PC-9 (cell line): ENCODE measurements at regions of chr3 and their contacts with region 1.

Region 1: GRCh38 chr3:120795017-120795648 is 52.6 kb downstream of the GTF2E1 start:
- DNase-seq: peak in 1 of 2 experiments; percentile 66
- H3K4me3 ChIP-seq: no peak overlapping the region
- H3K27ac ChIP-seq: no peak overlapping the region
- H3K4me1 ChIP-seq: no peaks in the 10 kb centered on the region
- H3K27me3 ChIP-seq: no peaks in the 10 kb centered on the region
- CTCF ChIP-seq: peak; percentile 90

Region 2: DNA sequence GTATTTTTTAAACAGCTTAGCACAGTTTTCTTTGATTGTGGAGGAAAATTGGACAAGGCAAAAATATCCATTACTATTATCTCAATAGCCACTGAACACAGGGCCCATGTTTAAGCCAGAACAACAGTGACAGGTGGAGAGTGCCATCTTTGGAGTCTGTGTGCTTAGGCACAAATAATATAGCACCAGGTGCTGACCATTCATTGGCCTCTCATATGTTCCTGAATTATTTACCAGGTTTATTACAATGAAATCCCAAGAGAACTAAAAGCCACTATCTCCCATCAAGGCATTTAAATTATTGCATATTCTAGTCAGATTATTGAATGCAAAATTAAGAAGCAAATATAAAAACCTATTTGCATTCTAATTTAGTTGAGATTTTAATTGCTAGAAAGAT is 549.7 kb before region 1 on chr3:
- CTCF ChIA-PET with region 1: no interaction called
- POLR2A ChIA-PET with region 1: no interaction called
- intact Hi-C with region 1: loop called (anchors 1 kb)
- DNase-seq: no peak
- H3K4me3 ChIP-seq: no peak overlapping the region
- H3K27ac ChIP-seq: no peak overlapping the region
- H3K4me1 ChIP-seq: no peaks in the 10 kb centered on the region
- H3K27me3 ChIP-seq: no peaks in the 10 kb centered on the region
- CTCF ChIP-seq: no peak

Region 3: DNA sequence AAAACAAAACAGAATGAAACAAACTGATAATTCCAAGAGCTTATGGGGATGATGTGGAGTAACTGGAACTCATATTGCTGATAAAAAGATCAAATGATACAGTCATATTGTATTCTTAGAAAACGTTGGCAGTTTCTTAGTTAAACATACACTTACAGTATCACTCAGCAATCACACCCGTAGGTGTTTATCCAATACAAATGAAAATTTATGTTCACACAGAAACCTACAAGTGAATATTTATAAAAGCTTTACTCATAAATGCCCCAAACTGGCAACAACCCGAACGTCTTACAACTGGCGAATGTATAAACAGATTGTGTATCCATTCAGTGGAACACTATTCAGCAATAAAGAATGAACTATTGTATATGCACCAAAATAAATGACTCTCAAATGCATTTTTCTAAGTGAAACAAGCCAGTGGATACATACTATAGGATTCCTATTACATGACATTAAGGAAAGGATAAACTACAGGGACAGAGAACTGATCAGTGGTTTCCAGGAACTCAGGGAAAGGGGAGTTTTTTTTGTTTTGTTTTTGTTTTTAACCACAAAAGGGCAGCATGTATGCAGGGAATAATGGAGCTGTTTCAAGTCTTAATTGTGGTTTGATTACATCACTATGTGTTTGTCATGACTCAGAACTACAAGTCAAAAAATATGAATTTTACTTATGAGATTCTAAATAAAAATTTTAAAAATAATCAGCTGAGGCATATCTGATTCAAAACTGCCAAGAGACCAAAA is 270.8 kb before region 1 on chr3:
- CTCF ChIA-PET with region 1: no interaction called
- POLR2A ChIA-PET with region 1: no interaction called
- intact Hi-C with region 1: no loop called
- DNase-seq: peak in 1 of 2 experiments; percentile 64
- H3K4me3 ChIP-seq: no peak overlapping the region
- H3K27ac ChIP-seq: no peak overlapping the region
- H3K4me1 ChIP-seq: peaks cover 13% of the 10 kb centered on the region; the same call in 1 of the 2 replicates
- H3K27me3 ChIP-seq: no peaks in the 10 kb centered on the region
- CTCF ChIP-seq: no peak